Right ventricle myocardium inferior (tissue), 1 donor: ENCODE measurements at regions of chr2 and their contacts with region 1.

Region 1: DNA sequence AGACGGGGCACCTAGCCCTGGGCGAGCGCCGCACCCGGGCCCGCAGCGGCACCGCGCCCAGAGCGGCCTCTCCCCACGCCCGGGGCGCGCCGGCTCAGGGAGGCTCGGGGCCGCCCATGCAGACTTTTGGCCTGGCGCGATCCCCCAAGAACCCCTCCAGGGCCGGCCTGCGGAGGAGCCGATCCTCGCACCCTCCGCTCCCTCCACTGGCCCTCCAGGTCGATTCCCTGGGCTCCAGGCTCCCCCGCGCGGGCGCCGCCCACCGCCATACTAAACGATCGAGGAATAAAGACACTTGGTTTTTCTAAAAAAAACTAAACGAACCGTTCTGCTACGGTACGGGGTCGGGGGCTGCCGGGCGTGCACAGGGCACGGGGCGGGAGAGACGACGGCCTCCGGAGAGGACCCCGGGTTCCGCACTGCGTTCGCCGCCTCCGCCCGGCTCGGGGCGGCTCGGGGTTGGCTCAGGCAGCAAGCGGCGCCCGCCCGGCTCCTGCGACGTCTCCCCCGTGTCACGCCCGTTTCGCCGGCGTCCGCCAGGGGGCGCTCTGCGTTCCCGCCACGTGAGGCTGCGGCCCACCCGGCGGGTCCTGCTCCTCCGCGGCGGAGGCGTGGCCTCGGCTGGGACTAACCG is 365 bp upstream of the KHK start:
- DNase-seq: peak; percentile 98
- ATAC-seq: peak; percentile 93

Region 2: DNA sequence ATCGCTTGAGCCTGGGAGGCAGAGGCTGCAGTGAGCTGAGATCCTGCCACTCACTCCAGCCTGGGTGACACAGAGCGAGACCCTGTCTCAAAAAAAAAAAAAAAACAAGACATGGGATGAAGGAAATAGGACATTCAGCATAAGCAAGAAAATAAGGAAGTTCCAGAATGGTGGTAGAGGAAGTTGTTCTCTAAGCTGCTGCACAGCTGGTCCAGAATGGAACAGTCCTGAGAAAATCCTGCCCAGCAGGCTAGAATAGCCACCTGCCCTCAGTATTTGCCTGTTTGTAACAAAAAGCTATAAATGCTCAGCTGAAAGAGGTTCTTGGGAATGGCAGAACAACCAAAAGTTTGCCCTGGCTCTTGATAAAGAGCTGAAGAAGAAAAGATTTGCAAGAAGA is 126.9 kb before region 1 on chr2:
- intact Hi-C with region 1: loop called (anchors 2 kb)
- DNase-seq: no peak
- ATAC-seq: peak; percentile 57

Region 3: GRCh38 chr2:27032495-27033252 is 53.5 kb before region 1 on chr2 and contains the start of gene TMEM214:
- intact Hi-C with region 1: loop called (anchors 5 kb)
- DNase-seq: peak; percentile 96
- ATAC-seq: peak; percentile 98
- total RNA-seq, gene TMEM214: 32.7 TPM

Region 4: DNA sequence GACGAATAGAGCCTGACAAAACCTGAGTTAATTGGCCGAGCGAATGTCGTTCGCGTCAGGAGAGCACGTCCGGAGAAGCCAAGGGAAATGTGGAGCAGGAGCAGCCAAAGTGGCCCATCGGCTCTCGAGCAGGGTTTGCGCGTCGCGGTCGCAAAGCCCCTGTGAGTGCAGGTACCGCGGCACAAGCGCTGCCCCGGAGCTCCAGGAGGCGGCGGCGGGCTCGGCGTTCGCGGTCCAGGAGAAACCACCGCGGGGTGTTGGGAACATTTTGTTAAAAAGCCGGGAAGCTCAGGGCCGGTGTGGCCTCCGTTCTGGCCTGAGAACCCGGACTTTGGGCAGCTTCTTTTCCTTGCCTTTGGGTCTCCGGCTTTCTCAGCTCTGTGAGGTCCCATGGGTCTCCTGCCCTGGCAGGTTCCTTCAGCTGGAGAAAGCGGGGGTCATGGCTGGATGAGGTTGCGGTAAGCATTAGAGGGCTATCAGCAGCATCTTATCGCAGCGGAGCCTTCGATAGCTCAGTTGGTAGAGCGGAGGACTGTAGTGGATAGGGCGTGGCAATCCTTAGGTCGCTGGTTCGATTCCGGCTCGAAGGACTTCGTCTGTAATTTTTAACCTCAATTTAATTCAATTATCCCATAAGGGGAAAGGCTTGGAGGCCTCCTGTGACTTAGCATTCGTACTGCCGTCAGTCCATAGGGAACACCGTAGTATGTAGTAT is 35.8 kb before region 1 on chr2:
- intact Hi-C with region 1: loop called (anchors 1 kb)
- DNase-seq: peak; percentile 90
- ATAC-seq: peak; percentile 85